ENCODE measurements at regions of chr18 and their contacts with region 1.

Region 1: DNA sequence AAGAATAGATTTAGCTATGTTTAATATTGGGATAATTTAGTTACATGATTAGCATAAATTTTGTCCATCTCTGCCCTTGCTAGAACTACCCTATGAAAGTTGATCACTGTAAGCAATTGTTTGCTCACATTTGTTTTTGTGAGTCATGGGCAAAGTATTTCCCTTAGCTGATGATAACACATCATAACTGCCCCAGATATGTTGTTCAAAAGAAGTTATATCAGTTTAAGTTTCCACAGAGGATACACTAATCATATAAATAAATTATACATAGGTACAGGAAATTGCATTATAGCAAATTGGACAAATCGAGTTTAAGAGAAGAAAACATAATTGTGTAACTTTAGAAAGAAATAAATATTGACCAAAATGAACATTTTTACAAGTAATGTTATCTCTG is 223.1 kb upstream of the PIK3C3 start:
- DNase-seq: peak; percentile 84
- H3K4me3 ChIP-seq: peak overlapping the region in 1 of 3 experiments; percentile 35
- H3K27ac ChIP-seq: peak overlapping the region; percentile 90
- H3K4me1 ChIP-seq: peaks cover 23% of the 10 kb centered on the region
- H3K27me3 ChIP-seq: no peaks in the 10 kb centered on the region
- CTCF ChIP-seq: no peak
- POLR2A ChIP-seq: no peak

Region 2: GRCh38 chr18:40365526-40365925 is 1366.4 kb before region 1 on chr18:
- CTCF ChIA-PET with region 1: no interaction called
- POLR2A ChIA-PET with region 1: no interaction called
- dilution Hi-C with region 1: no loop called
- intact Hi-C with region 1: loop called (anchors 5 kb)
- DNase-seq: no peak
- H3K4me3 ChIP-seq: no peak overlapping the region
- H3K27ac ChIP-seq: peak overlapping the region; percentile 52
- H3K4me1 ChIP-seq: peaks cover 36% of the 10 kb centered on the region
- H3K27me3 ChIP-seq: no peaks in the 10 kb centered on the region
- CTCF ChIP-seq: no peak
- POLR2A ChIP-seq: no peak

Region 3: DNA sequence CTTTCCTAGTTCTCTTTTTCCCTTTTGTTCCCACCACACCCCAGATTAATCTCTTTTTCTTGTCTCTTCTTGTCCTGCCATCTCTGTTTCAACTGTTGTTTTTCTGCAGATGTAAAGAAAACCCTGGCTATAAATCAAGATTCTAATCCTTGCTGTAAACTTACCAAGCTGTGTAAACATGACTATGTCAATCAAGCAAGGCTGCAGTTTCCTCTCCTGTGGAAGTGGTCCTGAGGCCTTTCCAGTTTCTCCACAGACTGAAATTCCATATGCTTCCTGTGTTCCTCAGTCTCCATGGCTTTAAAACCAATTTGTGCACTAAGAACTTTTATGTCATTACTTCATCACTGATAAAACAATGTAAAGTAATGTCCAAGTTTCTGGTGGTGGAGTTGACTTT is 65.6 kb before region 1 on chr18:
- CTCF ChIA-PET with region 1: no interaction called
- POLR2A ChIA-PET with region 1: no interaction called
- dilution Hi-C with region 1: no loop called
- intact Hi-C with region 1: loop called (anchors 5 kb)
- DNase-seq: peak; percentile 97
- H3K4me3 ChIP-seq: no peak overlapping the region
- H3K27ac ChIP-seq: peak overlapping the region; percentile 6
- H3K4me1 ChIP-seq: peaks cover 4% of the 10 kb centered on the region
- H3K27me3 ChIP-seq: no peaks in the 10 kb centered on the region
- CTCF ChIP-seq: no peak
- POLR2A ChIP-seq: no peak

Region 4: GRCh38 chr18:41703744-41704530 is 27.9 kb before region 1 on chr18:
- CTCF ChIA-PET with region 1: no interaction called
- POLR2A ChIA-PET with region 1: no interaction called
- dilution Hi-C with region 1: no loop called
- intact Hi-C with region 1: no loop called
- DNase-seq: peak; percentile 77
- H3K4me3 ChIP-seq: no peak overlapping the region
- H3K27ac ChIP-seq: no peak overlapping the region
- H3K4me1 ChIP-seq: peaks cover 12% of the 10 kb centered on the region
- H3K27me3 ChIP-seq: no peaks in the 10 kb centered on the region
- CTCF ChIP-seq: no peak
- POLR2A ChIP-seq: no peak